GM10248 (cell line): ENCODE measurements at regions of chr10 and their contacts with region 1.

Region 1: DNA sequence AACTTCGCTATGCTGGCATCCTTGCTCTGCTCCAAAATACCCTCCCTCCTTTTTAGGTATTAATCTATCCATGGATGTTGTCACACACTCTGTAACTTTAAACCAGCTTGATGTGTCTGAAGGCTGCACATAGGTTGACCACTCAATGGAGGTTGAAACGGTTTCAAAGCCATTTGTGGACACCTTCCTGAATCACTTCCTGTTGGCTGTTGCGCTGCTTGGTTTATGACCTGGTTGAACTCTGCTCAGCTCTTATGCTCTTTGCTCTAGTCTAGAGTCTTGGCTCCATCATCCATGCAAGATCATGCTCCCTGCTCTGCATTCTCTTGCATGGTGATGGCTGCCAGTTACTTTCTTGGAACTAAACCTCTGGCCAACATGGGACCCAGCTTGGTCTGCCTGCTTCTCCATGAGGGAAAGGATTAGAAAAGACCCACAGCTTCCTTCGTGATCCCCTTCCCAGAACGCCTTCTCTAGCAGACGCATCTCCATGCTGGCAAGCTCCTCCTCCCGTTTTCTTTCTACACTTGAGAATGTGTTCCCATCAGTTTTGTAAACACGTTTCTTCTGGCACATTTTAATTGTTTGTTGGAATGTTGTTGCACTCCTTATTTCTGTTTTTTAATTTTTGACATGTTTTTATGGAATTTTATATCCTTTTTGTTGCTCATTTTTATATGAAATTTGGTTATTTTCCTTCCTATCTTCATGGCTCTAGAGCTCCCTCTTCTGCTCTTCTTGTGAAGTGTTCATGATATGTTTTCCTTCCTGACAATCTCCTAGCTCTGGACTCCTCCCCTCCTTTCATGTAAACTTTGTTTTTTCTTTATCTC is 149.8 kb downstream of the XPNPEP1 start:
- DNase-seq: peak; percentile 18
- CTCF ChIP-seq: peak; percentile 49

Region 2: DNA sequence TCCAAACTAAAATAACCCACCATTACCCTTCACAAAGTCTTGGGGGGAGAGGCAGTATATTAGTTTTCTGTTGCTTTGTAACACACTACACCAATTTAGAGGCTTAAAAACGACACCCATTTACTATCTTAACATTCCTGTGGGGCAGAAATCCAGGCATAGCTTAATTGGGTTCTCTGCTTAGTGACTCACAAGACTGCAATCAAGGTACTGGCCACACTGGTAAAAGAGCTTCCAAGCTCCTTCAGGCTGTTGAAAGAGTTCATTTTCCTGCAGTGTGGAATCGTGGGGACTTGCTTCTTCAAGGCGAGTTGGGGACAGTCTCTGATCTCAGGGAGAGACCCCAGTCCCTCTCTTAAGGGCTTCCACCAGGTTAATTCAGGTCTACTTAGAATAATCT is 10.7 kb after region 1 on chr10:
- CTCF ChIA-PET with region 1: interaction called, 18 read pairs
- POLR2A ChIA-PET with region 1: no interaction called
- DNase-seq: no peak
- CTCF ChIP-seq: no peak

Region 3: GRCh38 chr10:110029450-110029849 is 255.9 kb after region 1 on chr10:
- CTCF ChIA-PET with region 1: no interaction called
- POLR2A ChIA-PET with region 1: no interaction called
- DNase-seq: no peak
- CTCF ChIP-seq: no peak

Region 4: DNA sequence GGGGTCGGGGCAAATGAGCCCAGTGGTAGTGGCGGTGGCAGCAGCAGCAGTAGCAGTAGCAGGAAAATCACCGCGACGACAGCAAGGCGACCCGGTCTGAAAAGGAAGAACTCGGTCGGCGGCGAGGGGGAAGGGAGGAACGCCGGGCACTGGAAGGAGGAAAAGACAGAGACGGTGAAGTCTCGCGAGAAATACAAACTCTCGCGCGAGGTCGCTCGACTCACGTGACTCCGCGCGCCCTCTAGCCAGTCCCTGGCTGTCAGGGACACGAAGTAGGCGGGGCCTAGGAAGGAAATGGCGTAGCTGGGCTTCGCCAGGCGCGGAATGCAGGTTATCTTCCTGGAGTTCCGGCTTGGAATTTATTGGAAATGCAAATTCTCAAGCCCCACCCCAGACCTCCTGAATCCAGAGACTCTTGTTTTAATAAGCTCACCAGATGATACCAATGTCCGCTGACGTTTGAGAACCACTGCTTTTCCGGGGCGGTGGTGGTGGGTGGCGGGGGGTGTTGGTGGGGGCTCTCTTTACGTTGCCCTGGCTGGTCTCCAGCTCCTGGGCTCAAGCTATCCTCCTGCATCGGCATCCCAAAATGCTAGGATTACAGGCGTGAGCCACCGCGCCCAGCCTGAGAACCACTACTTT is 531.4 kb after region 1 on chr10 and contains the start of gene SMNDC1:
- CTCF ChIA-PET with region 1: no interaction called
- POLR2A ChIA-PET with region 1: no interaction called
- DNase-seq: peak; percentile 97
- CTCF ChIP-seq: no peak